Prostate gland (tissue), 2 donors: ENCODE measurements at regions of chr5 and their contacts with region 1.

Region 1: DNA sequence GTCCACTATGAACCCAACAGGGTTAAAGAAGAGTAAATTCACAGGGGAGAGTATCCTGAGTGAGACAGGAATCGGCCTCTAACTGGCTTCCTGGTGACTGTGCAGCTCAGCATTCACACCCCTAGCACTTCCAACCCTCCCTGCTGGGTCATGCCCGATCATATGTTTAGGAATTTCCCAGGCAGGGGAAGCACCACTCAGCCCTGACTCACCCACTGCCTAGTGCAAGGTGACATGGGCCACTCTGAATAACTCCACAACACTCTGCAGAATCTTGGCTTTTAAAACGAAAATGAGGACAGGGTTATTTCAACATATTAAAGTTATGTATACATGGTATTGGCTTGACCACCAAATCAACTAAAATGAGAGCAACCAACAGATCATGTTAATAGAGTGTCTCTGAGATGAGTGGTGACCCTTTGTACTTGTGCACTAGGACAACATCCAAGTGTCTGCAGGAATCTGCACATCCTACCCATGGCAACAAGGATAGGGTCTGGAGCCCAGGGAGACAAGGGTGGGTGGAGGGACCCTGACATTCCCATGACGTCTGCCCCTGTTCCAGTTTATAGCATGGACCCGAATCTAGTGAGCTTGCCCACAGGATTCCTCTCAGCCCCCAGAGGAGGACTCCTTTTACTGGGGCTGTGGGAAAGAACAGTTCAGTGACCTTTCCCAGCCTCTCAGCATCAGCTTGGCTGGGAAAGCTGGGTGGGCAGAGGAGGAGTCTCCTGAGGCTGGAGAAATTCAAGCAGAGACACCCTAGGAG is 485.8 kb downstream of the SEMA5A start:
- DNase-seq: peak; percentile 23
- H3K4me3 ChIP-seq: no peak overlapping the region
- H3K27ac ChIP-seq: no peak overlapping the region
- H3K4me1 ChIP-seq: no peaks in the 10 kb centered on the region
- H3K27me3 ChIP-seq: no peaks in the 10 kb centered on the region
- CTCF ChIP-seq: no peak
- POLR2A ChIP-seq: no peak

Region 2: GRCh38 chr5:8660133-8660893 is 399.8 kb before region 1 on chr5:
- intact Hi-C with region 1: no loop called
- DNase-seq: no peak
- H3K4me3 ChIP-seq: no peak overlapping the region
- H3K27ac ChIP-seq: no peak overlapping the region
- H3K4me1 ChIP-seq: no peaks in the 10 kb centered on the region
- H3K27me3 ChIP-seq: no peaks in the 10 kb centered on the region
- CTCF ChIP-seq: no peak
- POLR2A ChIP-seq: no peak

Region 3: GRCh38 chr5:9015260-9015936 is 44.7 kb before region 1 on chr5:
- intact Hi-C with region 1: no loop called
- DNase-seq: no peak
- H3K4me3 ChIP-seq: no peak overlapping the region
- H3K27ac ChIP-seq: no peak overlapping the region
- H3K4me1 ChIP-seq: no peaks in the 10 kb centered on the region
- H3K27me3 ChIP-seq: no peaks in the 10 kb centered on the region
- CTCF ChIP-seq: no peak
- POLR2A ChIP-seq: no peak

Region 4: GRCh38 chr5:9534881-9535517 is 474.9 kb after region 1 on chr5:
- intact Hi-C with region 1: loop called (anchors 10 kb)
- DNase-seq: peak; percentile 66
- H3K4me3 ChIP-seq: no peak overlapping the region
- H3K27ac ChIP-seq: peak overlapping the region in 1 of 2 donors; percentile 20
- H3K4me1 ChIP-seq: no peaks in the 10 kb centered on the region
- H3K27me3 ChIP-seq: no peaks in the 10 kb centered on the region
- CTCF ChIP-seq: no peak
- POLR2A ChIP-seq: no peak